K562 (cell line): ENCODE measurements at regions of chr6 and their contacts with region 1.

Region 1: GRCh38 chr6:169723200-169723909 is 945 bp downstream of the PHF10 start:
- DNase-seq: peak; percentile 79 to 86 (median 84)
- ATAC-seq: peak; percentile 70
- H3K4me3 ChIP-seq: peak overlapping the region; percentile 63
- H3K27ac ChIP-seq: peak overlapping the region; percentile 72
- H3K4me1 ChIP-seq: peaks cover 25 to 31% of the 10 kb centered on the region in 2 experiments
- H3K27me3 ChIP-seq: no peaks in the 10 kb centered on the region
- CTCF ChIP-seq: no peak
- EP300 ChIP-seq: 0 out of 2 replicates have a peak, but pooled peaks have one; percentile 3
- POLR2A ChIP-seq: no peak
- RAD21 ChIP-seq: no peak

Region 2: DNA sequence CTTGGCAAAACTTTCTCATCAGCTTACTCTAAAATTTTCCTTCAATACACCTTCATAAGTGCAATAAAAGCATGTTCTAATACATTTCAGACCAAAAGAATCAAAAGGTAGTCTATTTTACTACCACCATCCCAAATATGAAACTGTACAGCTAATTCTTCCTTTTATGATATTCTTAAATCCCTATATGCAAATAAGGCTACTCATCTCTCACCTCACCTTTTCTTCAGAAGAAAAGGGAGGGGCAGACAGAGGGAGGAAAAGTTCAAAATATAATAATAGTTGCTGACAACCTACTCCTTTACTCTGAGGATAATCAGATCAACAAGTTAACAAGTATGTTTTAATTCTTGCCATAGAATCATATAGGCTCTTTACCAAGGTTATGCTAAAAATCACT is 14.1 kb before region 1 on chr6:
- CTCF ChIA-PET with region 1: no interaction called
- POLR2A ChIA-PET with region 1: interaction called, 46 read pairs
- in situ Hi-C with region 1: no loop called
- intact Hi-C with region 1: loop called (anchors 1 kb)
- DNase-seq: no peak
- ATAC-seq: no peak
- H3K4me3 ChIP-seq: no peak overlapping the region
- H3K27ac ChIP-seq: no peak overlapping the region
- H3K4me1 ChIP-seq: peaks cover 0 to 6% of the 10 kb centered on the region in 2 experiments; a peak in 2 of 5 replicates
- H3K27me3 ChIP-seq: no peaks in the 10 kb centered on the region
- CTCF ChIP-seq: no peak
- EP300 ChIP-seq: no peak
- POLR2A ChIP-seq: no peak
- RAD21 ChIP-seq: no peak

Region 3: GRCh38 chr6:169738204-169738975 is 15.0 kb after region 1 on chr6:
- CTCF ChIA-PET with region 1: no interaction called
- POLR2A ChIA-PET with region 1: interaction called, 22 read pairs
- in situ Hi-C with region 1: no loop called
- intact Hi-C with region 1: no loop called
- DNase-seq: no peak
- ATAC-seq: peak; percentile 71
- H3K4me3 ChIP-seq: no peak overlapping the region
- H3K27ac ChIP-seq: no peak overlapping the region
- H3K4me1 ChIP-seq: no peaks in the 10 kb centered on the region
- H3K27me3 ChIP-seq: no peaks in the 10 kb centered on the region
- CTCF ChIP-seq: no peak
- EP300 ChIP-seq: no peak
- POLR2A ChIP-seq: no peak
- RAD21 ChIP-seq: no peak

Region 4: GRCh38 chr6:169933839-169934698 is 210.7 kb after region 1 on chr6:
- CTCF ChIA-PET with region 1: no interaction called
- POLR2A ChIA-PET with region 1: no interaction called
- in situ Hi-C with region 1: no loop called
- intact Hi-C with region 1: no loop called
- DNase-seq: no peak
- ATAC-seq: no peak
- H3K4me3 ChIP-seq: no peak overlapping the region
- H3K27ac ChIP-seq: no peak overlapping the region
- H3K4me1 ChIP-seq: peaks cover 0 to 5% of the 10 kb centered on the region in 2 experiments; a peak in 1 of 5 replicates
- H3K27me3 ChIP-seq: peaks cover 68 to 75% of the 10 kb centered on the region in 2 experiments
- CTCF ChIP-seq: no peak
- EP300 ChIP-seq: no peak
- POLR2A ChIP-seq: no peak
- RAD21 ChIP-seq: no peak

Region 5: GRCh38 chr6:170003027-170003426 is 279.7 kb after region 1 on chr6:
- CTCF ChIA-PET with region 1: no interaction called
- POLR2A ChIA-PET with region 1: no interaction called
- in situ Hi-C with region 1: no loop called
- intact Hi-C with region 1: no loop called
- DNase-seq: peak in 2 of 4 experiments; percentile 32 to 39
- ATAC-seq: no peak
- H3K4me3 ChIP-seq: no peak overlapping the region
- H3K27ac ChIP-seq: no peak overlapping the region
- H3K4me1 ChIP-seq: no peaks in the 10 kb centered on the region
- H3K27me3 ChIP-seq: no peaks in the 10 kb centered on the region; a peak in 1 of 5 replicates
- CTCF ChIP-seq: peak; percentile 19 to 49 (median 35); a peak in 5 of 6 replicates
- EP300 ChIP-seq: no peak
- POLR2A ChIP-seq: no peak
- RAD21 ChIP-seq: no peak